ENCODE measurements at regions of chr10 and their contacts with region 1.

Region 1: DNA sequence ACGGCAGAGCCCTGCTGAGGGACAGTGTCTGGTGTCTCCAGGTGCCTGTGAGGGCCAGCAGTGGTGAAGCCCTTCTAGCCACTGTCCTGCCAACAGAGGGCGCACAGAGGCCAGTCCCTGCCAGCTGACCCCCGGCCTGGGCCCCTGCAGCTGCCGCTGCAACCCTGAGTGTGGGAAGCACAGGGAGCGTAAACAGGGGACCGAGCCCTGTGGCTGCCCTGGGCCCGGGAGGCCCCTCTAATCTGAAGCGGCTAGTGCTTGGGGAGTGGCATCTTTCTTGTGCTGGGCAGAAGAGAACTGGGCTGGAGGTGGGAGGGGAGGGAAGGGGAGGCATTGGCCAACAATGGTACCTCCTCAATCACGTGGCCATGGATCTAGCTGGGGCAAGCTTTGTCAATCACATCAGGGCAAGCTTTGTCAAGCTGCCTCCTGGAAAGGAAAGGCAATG is 34.6 kb downstream of the TRIM8 start:
- DNase-seq: no peak
- H3K4me3 ChIP-seq: no peak overlapping the region
- H3K4me3 Mint-ChIP-seq: no peak overlapping the region
- H3K27ac ChIP-seq: no peak overlapping the region
- H3K27ac Mint-ChIP-seq: peak overlapping the region in 5 of 7 donors; percentile 25 to 83 (median 64)
- H3K4me1 ChIP-seq: peaks cover 41% of the 10 kb centered on the region
- H3K4me1 Mint-ChIP-seq: peaks cover 23 to 57% (median 46%) of the 10 kb centered on the region in 4 donors
- H3K27me3 ChIP-seq: no peaks in the 10 kb centered on the region
- H3K27me3 Mint-ChIP-seq: no peaks in the 10 kb centered on the region

Region 2: DNA sequence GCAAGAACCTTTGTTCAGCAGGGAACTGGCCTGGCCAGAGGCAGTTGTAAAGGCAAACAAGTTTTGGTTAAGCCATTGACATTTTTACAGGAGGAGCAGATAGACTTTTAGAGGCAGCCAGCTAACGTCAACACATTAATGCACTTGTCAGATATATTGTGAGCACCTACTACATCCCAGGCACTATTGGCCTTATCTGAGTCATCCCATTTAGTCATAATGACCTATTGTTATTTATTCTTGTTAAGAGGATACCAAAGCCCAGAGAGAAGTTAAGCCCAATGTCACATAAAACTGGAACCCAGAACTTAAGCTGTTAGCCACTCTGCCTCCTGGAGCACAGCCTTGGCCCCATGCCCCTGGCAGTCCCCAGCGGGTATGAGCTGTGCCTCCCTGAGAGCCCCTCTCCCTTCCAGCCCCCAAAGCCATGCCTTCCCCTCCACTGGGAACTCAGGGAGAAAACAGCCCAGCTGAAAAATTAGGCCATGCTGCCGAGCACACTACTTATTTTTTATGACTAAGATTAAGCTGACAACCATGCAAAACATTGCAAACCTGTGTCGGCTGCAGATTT is 67.3 kb before region 1 on chr10:
- CTCF ChIA-PET with region 1: interaction called, 3 read pairs
- POLR2A ChIA-PET with region 1: interaction called, 3 read pairs
- intact Hi-C with region 1: loop called (anchors 1 kb)
- DNase-seq: peak in 1 of 5 donors; percentile 20
- H3K4me3 ChIP-seq: no peak overlapping the region
- H3K4me3 Mint-ChIP-seq: peak overlapping the region in 6 of 8 donors; percentile 30 to 72 (median 42)
- H3K27ac ChIP-seq: peak overlapping the region; percentile 27
- H3K27ac Mint-ChIP-seq: peak overlapping the region; percentile 94 to 99 (median 99)
- H3K4me1 ChIP-seq: peaks cover 44% of the 10 kb centered on the region
- H3K4me1 Mint-ChIP-seq: peaks cover 27 to 54% (median 36%) of the 10 kb centered on the region in 4 donors
- H3K27me3 ChIP-seq: no peaks in the 10 kb centered on the region
- H3K27me3 Mint-ChIP-seq: no peaks in the 10 kb centered on the region

Region 3: DNA sequence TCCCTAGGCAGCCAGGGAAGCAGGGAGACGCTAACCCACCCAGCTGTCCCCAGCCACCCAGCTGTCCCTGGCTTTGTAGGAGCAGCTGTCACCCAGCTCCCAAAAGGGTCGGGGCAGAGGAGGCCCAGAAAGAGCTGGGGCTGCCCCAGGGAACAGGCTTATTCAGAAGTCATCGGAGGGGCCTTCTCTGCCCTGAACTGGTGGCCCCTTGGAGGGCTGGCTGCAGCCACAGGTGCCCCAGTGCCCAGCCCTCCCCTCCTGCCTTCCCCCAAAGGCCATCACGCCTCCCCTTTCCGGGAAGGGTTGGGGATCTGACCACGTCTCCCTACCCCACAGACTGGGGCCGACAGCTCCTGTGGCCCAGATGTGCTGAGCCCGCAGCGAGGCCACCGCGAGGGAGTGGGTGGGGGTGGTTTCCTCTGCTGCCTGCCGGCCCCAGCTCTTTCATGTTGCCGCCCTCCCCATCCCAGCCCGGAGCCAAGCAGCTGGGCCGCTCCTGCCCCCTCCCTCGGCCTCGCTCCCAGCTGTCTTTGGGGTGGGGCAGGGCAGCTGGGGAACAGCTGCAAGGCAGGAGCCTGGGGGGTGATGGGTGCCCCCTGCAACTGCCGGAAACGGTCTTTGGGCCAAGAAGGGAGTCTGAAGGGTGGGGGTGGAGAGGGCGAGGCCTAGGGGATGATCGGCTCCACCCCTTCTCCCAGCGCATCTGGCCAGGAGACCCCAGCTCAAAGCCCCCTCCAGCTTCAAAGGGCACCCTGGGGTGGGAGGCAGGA is 17.8 kb before region 1 on chr10:
- CTCF ChIA-PET with region 1: interaction called, 13 read pairs
- POLR2A ChIA-PET with region 1: interaction called, 431 read pairs
- intact Hi-C with region 1: loop called (anchors 1 kb)
- DNase-seq: peak; percentile 50 to 67 (median 60)
- H3K4me3 ChIP-seq: peak overlapping the region in 1 of 2 donors; percentile 27
- H3K4me3 Mint-ChIP-seq: peak overlapping the region; percentile 42 to 87 (median 60)
- H3K27ac ChIP-seq: peak overlapping the region; percentile 48
- H3K27ac Mint-ChIP-seq: peak overlapping the region; percentile 41 to 94 (median 85)
- H3K4me1 ChIP-seq: peaks cover 45% of the 10 kb centered on the region
- H3K4me1 Mint-ChIP-seq: peaks cover 22 to 49% (median 30%) of the 10 kb centered on the region in 4 donors
- H3K27me3 ChIP-seq: no peaks in the 10 kb centered on the region
- H3K27me3 Mint-ChIP-seq: no peaks in the 10 kb centered on the region

Measured in CD4-positive, alpha-beta memory T cell (primary cell).